ENCODE measurements at regions of chr5 and their contacts with region 1.

Region 1: GRCh38 chr5:34522599-34523386 is 133.3 kb upstream of the RAI14 start:
- DNase-seq: peak; percentile 86 to 90
- H3K4me3 ChIP-seq: no peak overlapping the region
- H3K4me3 Mint-ChIP-seq: peak overlapping the region; percentile 50
- H3K27ac Mint-ChIP-seq: peak overlapping the region; percentile 90
- H3K4me1 ChIP-seq: peaks cover 34% of the 10 kb centered on the region
- H3K4me1 Mint-ChIP-seq: peaks cover 39% of the 10 kb centered on the region
- H3K27me3 ChIP-seq: no peaks in the 10 kb centered on the region
- H3K27me3 Mint-ChIP-seq: no peaks in the 10 kb centered on the region
- CTCF ChIP-seq: peak; percentile 66 to 89

Region 2: GRCh38 chr5:34452170-34452830 is 70.5 kb before region 1 on chr5:
- CTCF ChIA-PET with region 1: no interaction called
- POLR2A ChIA-PET with region 1: no interaction called
- intact Hi-C with region 1: no loop called
- DNase-seq: peak in 1 of 2 experiments; percentile 54
- H3K4me3 ChIP-seq: no peak overlapping the region
- H3K4me3 Mint-ChIP-seq: no peak overlapping the region
- H3K27ac Mint-ChIP-seq: no peak overlapping the region
- H3K4me1 ChIP-seq: peaks cover 8% of the 10 kb centered on the region
- H3K4me1 Mint-ChIP-seq: no peaks in the 10 kb centered on the region
- H3K27me3 ChIP-seq: no peaks in the 10 kb centered on the region
- H3K27me3 Mint-ChIP-seq: no peaks in the 10 kb centered on the region
- CTCF ChIP-seq: peak; percentile 49 to 69

Region 3: GRCh38 chr5:34474573-34475021 is 48.2 kb before region 1 on chr5:
- CTCF ChIA-PET with region 1: no interaction called
- POLR2A ChIA-PET with region 1: no interaction called
- intact Hi-C with region 1: loop called (anchors 1 kb)
- DNase-seq: peak in 1 of 2 experiments; percentile 59
- H3K4me3 ChIP-seq: no peak overlapping the region
- H3K4me3 Mint-ChIP-seq: no peak overlapping the region
- H3K27ac Mint-ChIP-seq: no peak overlapping the region
- H3K4me1 ChIP-seq: 0 out of 2 replicates have a peak, but pooled peaks cover 7% of the 10 kb centered on the region
- H3K4me1 Mint-ChIP-seq: peaks cover 7% of the 10 kb centered on the region
- H3K27me3 ChIP-seq: no peaks in the 10 kb centered on the region
- H3K27me3 Mint-ChIP-seq: no peaks in the 10 kb centered on the region
- CTCF ChIP-seq: peak; percentile 91 to 95

Region 4: GRCh38 chr5:34499001-34499734 is 23.6 kb before region 1 on chr5:
- CTCF ChIA-PET with region 1: no interaction called
- POLR2A ChIA-PET with region 1: no interaction called
- intact Hi-C with region 1: no loop called
- DNase-seq: no peak
- H3K4me3 ChIP-seq: no peak overlapping the region
- H3K4me3 Mint-ChIP-seq: no peak overlapping the region
- H3K27ac Mint-ChIP-seq: peak overlapping the region; percentile 12
- H3K4me1 ChIP-seq: peaks cover 17% of the 10 kb centered on the region
- H3K4me1 Mint-ChIP-seq: peaks cover 21% of the 10 kb centered on the region
- H3K27me3 ChIP-seq: no peaks in the 10 kb centered on the region
- H3K27me3 Mint-ChIP-seq: no peaks in the 10 kb centered on the region
- CTCF ChIP-seq: no peak

Region 5: GRCh38 chr5:34538026-34538672 is 15.4 kb after region 1 on chr5:
- CTCF ChIA-PET with region 1: no interaction called
- POLR2A ChIA-PET with region 1: no interaction called
- intact Hi-C with region 1: no loop called
- DNase-seq: peak in 1 of 2 experiments; percentile 36
- H3K4me3 ChIP-seq: no peak overlapping the region
- H3K4me3 Mint-ChIP-seq: no peak overlapping the region
- H3K27ac Mint-ChIP-seq: no peak overlapping the region
- H3K4me1 ChIP-seq: 0 out of 2 replicates have a peak, but pooled peaks cover 4% of the 10 kb centered on the region
- H3K4me1 Mint-ChIP-seq: no peaks in the 10 kb centered on the region
- H3K27me3 ChIP-seq: no peaks in the 10 kb centered on the region
- H3K27me3 Mint-ChIP-seq: no peaks in the 10 kb centered on the region
- CTCF ChIP-seq: no peak

Region 6: DNA sequence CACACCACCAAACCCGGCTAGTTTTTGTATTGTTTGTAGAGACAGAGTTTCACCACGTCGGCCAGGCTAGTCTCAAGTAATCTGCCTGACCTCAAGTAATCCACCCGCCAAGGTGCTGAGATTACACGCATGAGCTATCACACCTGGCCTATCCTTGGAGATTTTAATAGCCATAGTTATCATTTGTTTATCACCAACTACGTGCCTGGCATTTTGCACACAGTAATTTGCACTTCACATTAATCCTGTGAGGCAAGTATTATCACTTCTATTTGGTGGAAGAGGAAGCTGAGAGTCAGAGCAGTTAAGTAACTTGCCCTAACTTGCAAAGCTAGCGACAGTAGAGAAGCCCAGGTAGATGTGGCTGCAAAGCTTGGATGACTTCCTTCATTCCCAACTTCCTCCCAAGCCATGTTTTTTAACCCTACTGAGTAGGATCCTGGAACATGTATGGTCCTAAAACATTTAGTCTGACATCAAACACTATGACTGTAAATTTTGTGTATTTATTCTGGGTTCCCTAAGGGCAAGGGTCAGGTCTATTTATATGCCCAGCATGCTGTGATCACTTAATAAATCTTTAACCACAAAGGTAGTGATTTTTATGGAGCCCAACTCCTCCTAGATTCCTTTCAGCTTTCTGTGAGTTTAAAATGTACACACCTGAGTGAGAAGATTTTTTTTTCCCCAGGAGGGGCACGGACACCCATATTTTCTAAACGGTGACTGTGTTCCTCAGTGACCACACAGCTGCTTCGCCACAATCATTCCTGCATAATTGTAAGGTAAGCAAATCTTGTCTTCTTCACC is 33.1 kb after region 1 on chr5:
- CTCF ChIA-PET with region 1: no interaction called
- POLR2A ChIA-PET with region 1: no interaction called
- intact Hi-C with region 1: loop called (anchors 1 kb)
- DNase-seq: peak in 1 of 2 experiments; percentile 21
- H3K4me3 ChIP-seq: no peak overlapping the region
- H3K4me3 Mint-ChIP-seq: peak overlapping the region; percentile 27
- H3K27ac Mint-ChIP-seq: peak overlapping the region; percentile 58
- H3K4me1 ChIP-seq: peaks cover 22% of the 10 kb centered on the region
- H3K4me1 Mint-ChIP-seq: peaks cover 17% of the 10 kb centered on the region
- H3K27me3 ChIP-seq: no peaks in the 10 kb centered on the region
- H3K27me3 Mint-ChIP-seq: no peaks in the 10 kb centered on the region
- CTCF ChIP-seq: no peak

Region 7: DNA sequence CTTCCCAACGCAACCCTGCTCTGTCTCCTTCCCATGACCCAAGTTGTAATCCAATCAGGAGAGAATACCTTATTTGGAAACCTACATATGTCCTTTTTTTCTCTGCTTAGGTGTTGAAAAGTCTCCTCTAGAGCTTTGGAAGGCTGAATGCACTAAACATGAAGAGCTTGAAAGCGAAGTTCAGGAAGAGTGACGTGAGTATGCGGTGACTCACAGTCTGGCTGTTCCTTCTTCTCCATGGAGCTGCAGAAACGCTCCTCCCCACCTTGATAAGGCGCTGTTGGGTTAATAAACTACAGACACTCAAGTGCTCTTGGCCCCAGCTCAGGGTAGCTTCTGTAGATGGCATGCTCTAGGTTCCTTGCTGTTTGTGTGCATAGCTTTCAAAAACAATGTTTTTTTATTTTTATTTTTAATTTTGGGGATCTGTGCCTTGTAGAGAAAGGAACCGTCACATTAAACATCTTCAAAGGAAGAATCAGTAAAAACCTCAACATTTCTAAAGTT is 164.0 kb after region 1 on chr5:
- CTCF ChIA-PET with region 1: interaction called, 5 read pairs
- POLR2A ChIA-PET with region 1: no interaction called
- intact Hi-C with region 1: loop called (anchors 2 kb)
- DNase-seq: peak; percentile 85 to 90
- H3K4me3 ChIP-seq: no peak overlapping the region
- H3K4me3 Mint-ChIP-seq: peak overlapping the region; percentile 67
- H3K27ac Mint-ChIP-seq: peak overlapping the region; percentile 88
- H3K4me1 ChIP-seq: peaks cover 53% of the 10 kb centered on the region
- H3K4me1 Mint-ChIP-seq: peaks cover 43% of the 10 kb centered on the region
- H3K27me3 ChIP-seq: no peaks in the 10 kb centered on the region
- H3K27me3 Mint-ChIP-seq: no peaks in the 10 kb centered on the region
- CTCF ChIP-seq: no peak

Region 8: GRCh38 chr5:34709861-34710673 is 187.3 kb after region 1 on chr5:
- CTCF ChIA-PET with region 1: no interaction called
- POLR2A ChIA-PET with region 1: no interaction called
- intact Hi-C with region 1: no loop called
- DNase-seq: no peak
- H3K4me3 ChIP-seq: no peak overlapping the region
- H3K4me3 Mint-ChIP-seq: no peak overlapping the region
- H3K27ac Mint-ChIP-seq: no peak overlapping the region
- H3K4me1 ChIP-seq: peaks cover 17% of the 10 kb centered on the region
- H3K4me1 Mint-ChIP-seq: peaks cover 11% of the 10 kb centered on the region
- H3K27me3 ChIP-seq: no peaks in the 10 kb centered on the region
- H3K27me3 Mint-ChIP-seq: no peaks in the 10 kb centered on the region
- CTCF ChIP-seq: no peak

Region 9: DNA sequence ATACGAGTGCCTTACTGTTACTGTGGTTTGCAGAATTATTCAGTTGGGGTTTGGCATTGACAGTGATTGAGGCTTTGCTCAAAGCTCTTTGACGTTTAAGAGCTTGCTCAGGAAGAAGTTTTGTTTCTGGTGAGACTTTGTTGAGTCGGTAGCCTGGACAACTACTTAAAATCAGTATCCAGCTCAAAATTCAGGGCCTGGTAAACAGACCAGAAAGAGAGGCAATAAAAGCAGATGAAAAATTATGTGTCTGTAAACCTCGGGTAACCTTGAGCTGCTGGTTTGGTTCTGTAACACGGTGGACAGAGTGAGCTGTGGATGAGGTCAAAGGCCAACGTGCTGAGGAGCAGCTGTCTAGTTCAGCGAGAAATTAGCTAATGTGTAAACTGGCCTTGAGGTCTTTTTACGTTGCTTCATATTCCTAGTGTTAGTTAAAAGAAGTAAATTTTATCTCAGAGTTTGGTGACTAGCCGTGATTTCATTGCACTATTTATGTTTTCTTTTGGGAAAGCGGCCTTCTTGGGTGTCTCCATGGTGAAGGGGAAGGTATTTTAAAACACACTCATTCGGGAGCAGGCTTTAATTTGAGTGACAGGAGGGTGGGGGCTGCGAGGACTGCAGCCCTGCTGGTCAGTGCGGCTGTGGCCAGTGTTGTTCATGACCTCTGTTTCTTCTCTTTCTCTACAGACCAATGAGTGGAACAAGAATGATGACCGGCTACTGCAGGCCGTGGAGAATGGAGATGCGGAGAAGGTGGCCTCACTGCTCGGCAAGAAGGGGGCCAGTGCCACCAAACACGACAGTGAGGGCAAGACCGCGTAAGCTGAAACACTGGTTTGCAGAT is 234.2 kb after region 1 on chr5:
- CTCF ChIA-PET with region 1: no interaction called
- POLR2A ChIA-PET with region 1: no interaction called
- intact Hi-C with region 1: loop called (anchors 10 kb)
- DNase-seq: peak; percentile 66 to 77
- H3K4me3 ChIP-seq: no peak overlapping the region
- H3K4me3 Mint-ChIP-seq: peak overlapping the region; percentile 40
- H3K27ac Mint-ChIP-seq: peak overlapping the region; percentile 50
- H3K4me1 ChIP-seq: peaks cover 22% of the 10 kb centered on the region
- H3K4me1 Mint-ChIP-seq: peaks cover 38% of the 10 kb centered on the region
- H3K27me3 ChIP-seq: no peaks in the 10 kb centered on the region
- H3K27me3 Mint-ChIP-seq: no peaks in the 10 kb centered on the region
- CTCF ChIP-seq: no peak

Region 10: DNA sequence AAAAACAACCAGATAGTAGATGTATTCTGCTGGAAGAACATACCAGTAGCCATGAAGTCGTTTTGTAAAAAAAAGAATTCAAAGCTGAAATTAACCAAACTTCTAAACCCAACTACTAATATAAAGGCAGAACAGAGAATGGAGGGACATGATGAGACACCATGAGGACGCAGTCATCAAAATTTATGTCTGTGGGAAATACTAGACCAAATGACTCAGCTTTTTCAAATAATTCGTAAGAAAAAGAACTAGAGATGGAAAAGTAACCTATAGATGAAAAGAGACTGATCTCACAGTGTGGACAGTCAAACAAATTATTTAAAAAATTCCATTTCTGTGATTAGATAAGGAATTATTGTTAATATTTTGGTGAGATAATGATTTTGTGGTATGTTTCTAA is 326.5 kb after region 1 on chr5:
- CTCF ChIA-PET with region 1: no interaction called
- POLR2A ChIA-PET with region 1: no interaction called
- intact Hi-C with region 1: loop called (anchors 2 kb)
- DNase-seq: no peak
- H3K4me3 ChIP-seq: no peak overlapping the region
- H3K4me3 Mint-ChIP-seq: no peak overlapping the region
- H3K27ac Mint-ChIP-seq: no peak overlapping the region
- H3K4me1 ChIP-seq: peaks cover 33% of the 10 kb centered on the region
- H3K4me1 Mint-ChIP-seq: peaks cover 19% of the 10 kb centered on the region
- H3K27me3 ChIP-seq: no peaks in the 10 kb centered on the region
- H3K27me3 Mint-ChIP-seq: no peaks in the 10 kb centered on the region
- CTCF ChIP-seq: no peak

Measured in Caco-2 (cell line).